Activated T-helper 1 cell treated with anti-CD3 and anti-CD28 coated beads, Interleukin-12 subunit alpha, Interleukin-12 subunit beta, Interleukin-2, Interleukin-4 antibody, amounts not matched to agents 30 ng/mL and 10 ng/mL and 1 ng/mL, durations not matched to agents 14 hours and 24 hours and 36 hours (primary cell): ENCODE measurements at regions of chr15 and their contacts with region 1.

Region 1: GRCh38 chr15:38563723-38564519 is 693 bp downstream of the RASGRP1 start:
- DNase-seq: peak; percentile 85
- H3K4me3 Mint-ChIP-seq: peak overlapping the region; percentile 96
- H3K27ac Mint-ChIP-seq: peak overlapping the region; percentile 98
- H3K4me1 Mint-ChIP-seq: peaks cover 61% of the 10 kb centered on the region
- H3K27me3 Mint-ChIP-seq: peaks cover 2% of the 10 kb centered on the region

Region 2: GRCh38 chr15:38474155-38474757 is 89.7 kb before region 1 on chr15:
- intact Hi-C with region 1: loop called (anchors 1 kb)
- DNase-seq: peak; percentile 29
- H3K4me3 Mint-ChIP-seq: no peak overlapping the region
- H3K27ac Mint-ChIP-seq: peak overlapping the region; percentile 41
- H3K4me1 Mint-ChIP-seq: peaks cover 20% of the 10 kb centered on the region
- H3K27me3 Mint-ChIP-seq: no peaks in the 10 kb centered on the region

Region 3: DNA sequence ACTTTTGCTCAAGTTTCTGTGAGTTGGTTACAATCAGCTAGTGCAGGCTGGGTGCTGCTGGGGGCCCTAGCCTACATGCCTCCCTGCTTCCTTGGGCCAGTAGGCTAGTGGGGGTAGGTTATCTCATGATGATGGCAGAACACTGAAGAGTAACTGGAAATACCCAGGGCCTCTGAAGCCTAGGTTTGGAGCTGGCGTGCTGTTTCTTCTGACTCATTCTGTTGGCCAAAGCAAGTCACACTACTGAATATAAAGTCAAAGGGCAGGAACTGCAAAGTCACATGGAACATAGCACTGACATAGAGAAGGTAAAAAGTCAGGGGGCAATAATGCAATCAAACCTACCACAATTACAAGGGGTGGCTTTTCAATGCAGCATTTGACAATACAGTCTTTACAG is 33.8 kb before region 1 on chr15:
- intact Hi-C with region 1: loop called (anchors 1 kb)
- DNase-seq: peak; percentile 16
- H3K4me3 Mint-ChIP-seq: peak overlapping the region; percentile 46
- H3K27ac Mint-ChIP-seq: peak overlapping the region; percentile 85
- H3K4me1 Mint-ChIP-seq: peaks cover 93% of the 10 kb centered on the region
- H3K27me3 Mint-ChIP-seq: no peaks in the 10 kb centered on the region

Region 4: DNA sequence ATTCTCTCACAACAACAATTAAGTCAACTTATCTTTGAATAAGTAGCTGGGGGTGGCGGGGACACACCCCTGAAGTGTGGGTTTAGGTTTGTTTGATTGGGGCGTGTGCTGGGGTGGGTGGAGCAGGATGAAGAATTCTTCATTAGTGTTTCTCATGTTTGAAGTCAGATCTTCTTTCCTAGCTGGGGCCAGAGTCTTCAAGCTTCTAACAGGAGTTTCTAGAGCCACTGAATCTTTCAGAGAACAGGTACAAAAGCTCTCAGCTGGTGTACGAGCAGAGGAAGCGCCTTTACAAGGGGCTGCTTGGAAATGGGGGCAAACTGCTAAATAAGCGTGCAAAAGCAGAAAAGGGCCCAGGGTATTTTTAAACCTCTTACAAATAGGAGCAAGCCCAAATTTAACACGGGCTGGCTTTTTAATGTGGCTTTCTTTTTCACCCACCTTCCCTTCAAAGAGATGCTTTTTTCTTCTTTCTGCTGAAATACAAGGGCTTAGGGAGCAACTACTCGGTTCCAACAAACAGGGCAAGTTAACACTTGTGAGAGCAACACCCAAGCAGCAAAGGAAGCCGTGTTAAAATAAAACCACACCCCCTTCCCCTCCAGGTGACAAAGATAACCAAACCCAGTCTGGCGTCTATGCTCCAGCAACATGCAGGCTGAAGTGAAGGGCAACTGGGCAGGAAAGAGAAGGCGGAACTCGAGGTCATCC is 87.6 kb after region 1 on chr15:
- intact Hi-C with region 1: loop called (anchors 1 kb)
- DNase-seq: peak; percentile 57
- H3K4me3 Mint-ChIP-seq: peak overlapping the region; percentile 79
- H3K27ac Mint-ChIP-seq: peak overlapping the region; percentile 94
- H3K4me1 Mint-ChIP-seq: peaks cover 93% of the 10 kb centered on the region
- H3K27me3 Mint-ChIP-seq: no peaks in the 10 kb centered on the region

Region 5: DNA sequence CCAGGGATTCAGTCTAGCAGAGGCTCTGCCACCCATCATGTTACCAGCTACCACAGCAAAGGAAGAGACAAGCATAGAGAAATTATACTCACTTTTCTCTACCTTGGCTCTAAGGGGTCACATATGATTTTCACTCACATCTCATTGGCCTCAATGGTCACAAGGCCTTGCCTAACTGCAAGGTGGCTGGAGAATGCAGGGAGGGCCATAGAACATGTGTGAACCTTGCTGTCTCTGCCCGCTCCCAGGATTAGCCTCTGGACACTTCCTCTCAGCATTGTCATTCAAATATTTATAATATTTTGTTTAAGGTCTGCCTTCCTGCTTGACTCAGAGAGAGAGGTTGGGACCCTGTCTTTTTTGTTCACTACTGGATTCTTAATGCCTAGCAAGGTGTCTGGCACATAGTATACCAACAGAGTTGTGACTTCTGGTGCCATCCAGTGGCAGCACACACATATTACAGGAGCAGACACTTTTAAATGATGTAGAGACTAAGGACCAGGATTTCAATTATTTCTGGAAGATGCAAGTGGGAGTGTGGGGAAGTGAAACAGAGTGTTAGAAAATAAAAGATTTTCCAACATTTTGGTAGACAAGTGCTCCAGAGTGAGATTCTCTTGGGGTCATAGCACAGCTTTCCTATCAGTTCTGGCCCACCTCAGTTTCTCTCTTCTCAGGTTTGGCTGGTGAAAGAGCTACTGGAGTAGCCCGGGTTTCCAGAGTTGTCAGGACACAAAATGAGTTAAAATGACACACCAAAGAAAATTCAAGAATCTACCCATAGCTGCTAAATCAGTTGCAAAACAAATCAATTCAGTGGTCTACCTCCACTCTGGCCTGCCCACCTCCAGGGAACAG is 119.7 kb after region 1 on chr15:
- intact Hi-C with region 1: loop called (anchors 1 kb)
- DNase-seq: peak; percentile 57
- H3K4me3 Mint-ChIP-seq: peak overlapping the region; percentile 65
- H3K27ac Mint-ChIP-seq: peak overlapping the region; percentile 95
- H3K4me1 Mint-ChIP-seq: peaks cover 80% of the 10 kb centered on the region
- H3K27me3 Mint-ChIP-seq: no peaks in the 10 kb centered on the region

Region 6: DNA sequence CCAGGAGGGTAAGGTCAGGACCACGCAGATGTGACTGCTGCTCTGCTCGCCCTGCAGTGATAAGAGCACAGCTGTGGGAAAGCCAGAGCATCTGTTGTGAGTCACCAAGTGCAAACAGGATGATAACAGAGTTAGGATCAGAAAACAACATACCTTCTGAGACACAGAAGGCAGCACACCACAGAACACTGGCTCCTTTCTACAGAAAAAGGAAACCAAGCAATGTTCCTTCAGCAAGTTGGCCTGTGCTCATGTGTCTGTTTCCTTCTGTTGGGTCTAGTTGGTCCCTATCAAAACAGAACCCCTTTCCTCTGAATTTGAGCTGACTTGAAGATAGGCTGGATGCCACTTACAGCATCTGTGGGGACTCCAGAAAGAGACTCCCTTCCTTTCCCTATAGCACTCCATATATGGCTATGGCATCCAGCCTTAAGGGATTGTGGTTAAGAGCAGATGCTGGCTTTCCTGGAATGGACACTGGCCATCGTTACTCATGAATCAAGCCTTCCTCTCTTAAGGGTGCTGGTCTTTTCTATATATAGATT is 576.2 kb after region 1 on chr15:
- intact Hi-C with region 1: loop called (anchors 10 kb)
- DNase-seq: peak; percentile 14
- H3K4me3 Mint-ChIP-seq: no peak overlapping the region
- H3K27ac Mint-ChIP-seq: peak overlapping the region; percentile 37
- H3K4me1 Mint-ChIP-seq: peaks cover 54% of the 10 kb centered on the region
- H3K27me3 Mint-ChIP-seq: no peaks in the 10 kb centered on the region